ENCODE measurements at regions of chr1 and their contacts with region 1.

Region 1: GRCh38 chr1:99481391-99481996 is 164.4 kb upstream of the PALMD start:
- DNase-seq: no peak
- H3K4me3 ChIP-seq: no peak overlapping the region
- H3K27ac ChIP-seq: no peak overlapping the region
- H3K27me3 ChIP-seq: no peaks in the 10 kb centered on the region
- CTCF ChIP-seq: peak; percentile 79

Region 2: GRCh38 chr1:99180343-99180808 is 301.1 kb before region 1 on chr1:
- CTCF ChIA-PET with region 1: interaction called, 137 read pairs
- POLR2A ChIA-PET with region 1: no interaction called
- DNase-seq: peak; percentile 51
- H3K4me3 ChIP-seq: no peak overlapping the region
- H3K27ac ChIP-seq: no peak overlapping the region
- H3K27me3 ChIP-seq: no peaks in the 10 kb centered on the region
- CTCF ChIP-seq: peak; percentile 84

Region 3: GRCh38 chr1:99348397-99349132 is 132.9 kb before region 1 on chr1:
- CTCF ChIA-PET with region 1: no interaction called
- POLR2A ChIA-PET with region 1: no interaction called
- DNase-seq: no peak
- H3K4me3 ChIP-seq: no peak overlapping the region
- H3K27ac ChIP-seq: no peak overlapping the region
- H3K27me3 ChIP-seq: no peaks in the 10 kb centered on the region
- CTCF ChIP-seq: no peak

Region 4: DNA sequence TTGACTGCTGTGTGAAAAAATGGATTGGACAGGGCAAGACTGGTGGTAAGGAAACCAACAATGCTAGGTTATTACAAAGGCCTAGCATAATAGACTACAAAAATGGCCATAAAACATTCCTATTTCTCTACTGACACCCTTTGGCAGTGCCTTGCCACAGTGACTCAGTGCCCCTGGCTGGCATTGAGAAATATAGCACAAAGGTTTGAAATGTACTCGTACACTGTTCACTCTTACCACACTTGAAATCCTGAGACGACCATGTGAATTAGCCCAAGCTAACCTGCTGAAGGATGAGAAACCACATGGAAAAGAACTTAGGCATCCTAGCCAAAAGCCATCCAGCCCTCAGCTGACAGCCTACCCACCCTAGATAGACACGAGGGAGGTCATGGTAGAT is 14.6 kb after region 1 on chr1:
- CTCF ChIA-PET with region 1: interaction called, 26 read pairs
- POLR2A ChIA-PET with region 1: no interaction called
- DNase-seq: no peak
- H3K4me3 ChIP-seq: no peak overlapping the region
- H3K27ac ChIP-seq: no peak overlapping the region
- H3K27me3 ChIP-seq: no peaks in the 10 kb centered on the region
- CTCF ChIP-seq: no peak

Region 5: GRCh38 chr1:99650773-99651437 is 169.4 kb after region 1 on chr1:
- CTCF ChIA-PET with region 1: no interaction called
- POLR2A ChIA-PET with region 1: no interaction called
- DNase-seq: no peak
- H3K4me3 ChIP-seq: no peak overlapping the region
- H3K27ac ChIP-seq: no peak overlapping the region
- H3K27me3 ChIP-seq: no peaks in the 10 kb centered on the region
- CTCF ChIP-seq: no peak

Region 6: GRCh38 chr1:99691175-99691574 is 209.7 kb after region 1 on chr1:
- CTCF ChIA-PET with region 1: interaction called, 20 read pairs
- POLR2A ChIA-PET with region 1: no interaction called
- DNase-seq: no peak
- H3K4me3 ChIP-seq: no peak overlapping the region
- H3K27ac ChIP-seq: no peak overlapping the region
- H3K27me3 ChIP-seq: no peaks in the 10 kb centered on the region
- CTCF ChIP-seq: no peak

Region 7: DNA sequence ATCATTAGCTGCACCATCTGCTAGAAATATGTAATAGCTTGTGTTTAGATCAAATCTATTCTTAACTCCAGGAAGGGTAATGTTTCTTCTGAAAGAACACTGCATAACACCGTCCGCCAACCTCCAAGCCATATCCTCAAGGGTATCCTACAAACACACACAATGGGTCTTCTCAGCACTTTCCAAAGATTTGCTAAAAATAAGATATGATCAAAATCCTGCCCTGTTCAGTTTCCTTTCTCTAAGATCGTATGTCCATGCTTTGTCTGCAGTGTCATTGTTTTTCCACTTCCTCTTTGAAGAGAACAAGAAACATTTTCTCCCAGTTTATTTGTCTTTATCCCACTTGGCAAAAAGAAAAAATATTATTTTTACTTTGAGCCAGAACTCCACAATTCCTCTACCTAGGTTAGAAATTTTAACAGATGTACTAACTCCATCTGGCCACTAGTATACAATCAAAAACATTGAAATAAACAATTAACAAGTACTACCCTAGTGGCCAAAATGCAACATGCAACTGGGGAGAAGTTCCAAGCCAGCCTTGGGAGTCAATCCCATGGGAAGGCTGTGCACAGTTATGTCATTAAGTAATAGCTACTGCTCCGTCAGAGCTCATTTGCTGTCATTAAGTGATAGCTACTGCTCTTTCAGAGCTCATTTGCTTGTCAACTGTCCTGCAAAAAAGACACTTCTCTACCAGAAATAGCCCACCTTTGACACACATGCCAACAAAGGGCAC is 247.2 kb after region 1 on chr1:
- CTCF ChIA-PET with region 1: no interaction called
- POLR2A ChIA-PET with region 1: no interaction called
- DNase-seq: no peak
- H3K4me3 ChIP-seq: no peak overlapping the region
- H3K27ac ChIP-seq: no peak overlapping the region
- H3K27me3 ChIP-seq: no peaks in the 10 kb centered on the region
- CTCF ChIP-seq: peak; percentile 53

Measured in AG04450 (cell line).